PC-9 (cell line): ENCODE measurements at regions of chr15 and their contacts with region 1.

Region 1: GRCh38 chr15:93030430-93031105 is 58.4 kb downstream of the RGMA start:
- DNase-seq: peak; percentile 61 to 68
- H3K4me3 ChIP-seq: no peak overlapping the region
- H3K27ac ChIP-seq: no peak overlapping the region
- H3K4me1 ChIP-seq: no peaks in the 10 kb centered on the region
- H3K27me3 ChIP-seq: no peaks in the 10 kb centered on the region
- CTCF ChIP-seq: peak; percentile 89

Region 2: DNA sequence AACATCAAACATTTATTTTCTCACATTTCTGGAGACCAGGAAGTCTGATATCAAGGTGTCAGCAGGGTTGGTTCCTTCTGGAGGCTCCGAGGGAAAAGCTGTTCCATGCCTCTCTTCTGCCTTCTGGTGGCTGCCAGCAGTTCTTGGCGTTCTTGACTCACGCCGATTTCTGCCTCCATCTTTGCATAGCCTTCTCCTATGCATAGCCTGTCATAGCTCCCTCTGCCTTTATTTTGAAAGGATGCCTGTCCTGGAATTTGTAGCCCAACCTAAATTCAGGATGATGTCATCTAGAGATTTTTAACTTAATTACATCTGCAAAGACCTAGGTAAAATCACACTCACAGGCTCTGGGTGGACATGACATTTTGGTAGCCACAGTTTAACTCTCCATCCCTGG is 12.0 kb before region 1 on chr15:
- CTCF ChIA-PET with region 1: no interaction called
- POLR2A ChIA-PET with region 1: interaction called, 12 read pairs
- intact Hi-C with region 1: no loop called
- DNase-seq: no peak
- H3K4me3 ChIP-seq: no peak overlapping the region
- H3K27ac ChIP-seq: 0 out of 2 replicates have a peak overlapping the region, but pooled peaks have one; percentile 29
- H3K4me1 ChIP-seq: no peaks in the 10 kb centered on the region
- H3K27me3 ChIP-seq: no peaks in the 10 kb centered on the region
- CTCF ChIP-seq: no peak

Region 3: DNA sequence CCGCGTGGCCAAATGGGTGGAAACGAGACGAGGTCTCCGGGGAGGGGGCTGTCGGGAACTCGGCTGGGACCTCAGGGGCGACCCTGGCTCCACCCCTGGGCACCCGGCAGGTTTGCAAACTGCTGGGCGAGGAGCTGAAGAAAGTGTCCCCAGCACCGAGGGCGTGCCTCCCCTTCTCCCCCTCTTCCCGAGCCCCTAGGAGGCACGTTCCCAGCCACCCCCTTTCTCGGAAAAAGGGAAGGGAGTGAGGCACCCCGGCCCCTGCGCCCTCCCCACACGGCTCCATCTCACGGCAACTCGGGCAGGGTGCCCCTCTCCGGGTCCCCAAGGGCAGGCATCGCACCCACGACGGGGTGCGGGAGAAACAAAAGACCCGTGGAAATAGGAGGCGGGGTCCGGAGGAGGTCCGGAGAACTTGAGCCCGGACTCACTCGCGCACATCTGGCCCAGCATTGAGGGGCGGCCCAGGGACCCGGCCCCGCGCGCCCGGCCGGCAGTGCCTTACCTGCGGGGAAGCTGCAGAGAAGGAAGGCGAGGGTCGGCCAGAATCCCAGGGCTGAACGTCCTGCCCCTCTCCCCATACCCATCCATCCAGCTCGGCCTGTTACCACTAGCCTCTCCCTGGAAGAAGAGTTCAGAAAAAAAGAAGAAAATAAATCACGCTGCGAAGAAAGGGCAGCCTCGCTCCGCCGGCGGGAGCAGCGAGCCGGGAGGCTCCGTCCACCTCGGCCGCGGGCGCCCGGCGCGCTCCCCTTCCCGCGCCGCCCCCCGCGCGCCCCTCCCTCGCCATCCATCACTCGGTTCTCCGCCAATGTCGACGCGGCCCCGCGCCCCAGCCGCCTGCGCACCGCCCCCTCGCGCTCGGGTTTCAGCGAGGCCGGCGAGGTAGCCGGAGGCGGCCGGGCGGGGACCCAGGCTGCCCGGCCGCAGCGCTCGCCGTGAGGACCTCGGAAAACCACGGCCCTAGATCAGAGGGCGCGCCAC is 42.1 kb after region 1 on chr15:
- CTCF ChIA-PET with region 1: no interaction called
- POLR2A ChIA-PET with region 1: no interaction called
- intact Hi-C with region 1: loop called (anchors 2 kb)
- DNase-seq: peak; percentile 60 to 84
- H3K4me3 ChIP-seq: peak overlapping the region; percentile 79
- H3K27ac ChIP-seq: no peak overlapping the region
- H3K4me1 ChIP-seq: peaks cover 9% of the 10 kb centered on the region
- H3K27me3 ChIP-seq: peaks cover 19% of the 10 kb centered on the region
- CTCF ChIP-seq: no peak

Region 4: GRCh38 chr15:93974804-93975481 is 944.4 kb after region 1 on chr15:
- CTCF ChIA-PET with region 1: interaction called, 3 read pairs
- POLR2A ChIA-PET with region 1: no interaction called
- intact Hi-C with region 1: loop called (anchors 10 kb)
- DNase-seq: no peak
- H3K4me3 ChIP-seq: no peak overlapping the region
- H3K27ac ChIP-seq: no peak overlapping the region
- H3K4me1 ChIP-seq: no peaks in the 10 kb centered on the region
- H3K27me3 ChIP-seq: no peaks in the 10 kb centered on the region
- CTCF ChIP-seq: peak; percentile 43; the same call in 1 of the 2 replicates

Region 5: DNA sequence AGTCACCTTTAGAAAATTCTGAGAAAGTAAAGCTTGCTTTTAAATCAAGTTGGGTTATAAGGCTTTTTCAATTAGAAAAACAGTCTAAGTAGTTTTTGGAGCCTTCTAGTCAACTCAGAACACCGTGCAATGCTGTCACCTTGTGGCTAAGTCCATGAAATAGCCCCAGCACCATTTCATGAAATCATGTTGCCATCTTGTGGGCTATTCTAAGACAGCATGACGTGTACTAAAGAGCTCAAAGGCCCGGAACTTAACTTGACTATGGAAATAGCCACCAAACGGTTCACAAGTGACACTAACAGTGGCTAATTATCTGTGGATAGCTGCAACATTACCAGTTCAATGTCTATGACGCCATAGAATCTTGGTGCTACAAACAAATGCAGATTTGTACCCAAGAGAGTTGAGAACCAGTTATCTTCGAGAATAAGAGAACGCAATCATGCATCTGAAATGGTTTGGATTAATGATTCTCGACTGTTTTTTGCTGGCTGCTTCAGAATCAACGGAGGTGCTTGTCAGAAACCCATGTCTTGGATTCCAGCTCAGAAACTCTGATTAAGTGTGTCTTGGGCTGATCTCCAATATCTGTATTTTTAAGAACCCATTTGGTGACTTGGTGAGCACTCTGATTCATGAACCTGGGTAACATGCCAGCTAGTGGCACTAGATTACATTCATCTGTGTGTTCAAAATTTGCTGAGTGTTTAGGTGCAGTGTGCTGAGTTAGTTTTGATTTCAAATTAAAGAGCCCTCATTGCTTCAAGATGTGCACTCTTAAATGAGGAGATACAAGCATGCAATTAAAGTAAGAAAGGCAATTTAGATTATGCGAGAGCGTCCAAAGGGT is 1089.6 kb after region 1 on chr15:
- CTCF ChIA-PET with region 1: interaction called, 25 read pairs
- POLR2A ChIA-PET with region 1: no interaction called
- intact Hi-C with region 1: loop called (anchors 1 kb)
- DNase-seq: peak; percentile 35 to 46
- H3K4me3 ChIP-seq: no peak overlapping the region
- H3K27ac ChIP-seq: no peak overlapping the region
- H3K4me1 ChIP-seq: no peaks in the 10 kb centered on the region
- H3K27me3 ChIP-seq: no peaks in the 10 kb centered on the region
- CTCF ChIP-seq: peak; percentile 81

Region 6: DNA sequence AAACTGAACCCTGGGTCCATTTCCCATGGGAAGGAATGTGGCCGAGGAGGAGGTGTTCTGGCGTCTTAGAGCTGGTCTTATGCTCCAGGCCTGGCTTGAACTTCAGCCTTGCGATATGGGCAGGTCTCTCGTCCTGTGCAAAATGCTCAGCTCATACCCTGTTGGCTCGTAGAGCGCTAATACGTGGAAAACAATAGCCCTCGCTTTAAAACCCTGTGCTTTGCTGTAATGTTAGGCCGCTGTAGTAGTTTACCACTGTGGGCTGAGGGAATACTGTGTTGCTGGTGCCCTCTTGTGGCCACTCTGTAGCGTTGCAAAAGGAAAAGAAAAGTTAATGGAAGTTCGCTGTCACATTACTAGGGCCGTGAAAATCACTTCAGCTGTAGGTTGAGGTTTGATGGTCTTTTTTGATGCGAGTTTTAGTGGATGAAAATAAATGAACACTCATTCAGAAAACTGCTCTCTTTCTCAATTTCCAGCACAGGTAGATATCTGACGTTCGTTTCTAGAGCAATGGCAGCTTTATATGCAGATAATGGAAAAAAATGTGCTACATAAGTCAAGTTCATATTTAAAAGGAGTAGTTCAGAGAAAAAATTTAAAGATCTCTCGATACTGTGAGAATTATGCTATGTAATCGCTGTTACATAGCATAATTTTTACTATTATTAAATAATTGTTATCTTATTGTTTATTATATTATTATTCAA is 1293.7 kb after region 1 on chr15:
- CTCF ChIA-PET with region 1: no interaction called
- POLR2A ChIA-PET with region 1: no interaction called
- intact Hi-C with region 1: loop called (anchors 5 kb)
- DNase-seq: peak in 1 of 2 experiments; percentile 19
- H3K4me3 ChIP-seq: no peak overlapping the region
- H3K27ac ChIP-seq: no peak overlapping the region
- H3K4me1 ChIP-seq: no peaks in the 10 kb centered on the region
- H3K27me3 ChIP-seq: no peaks in the 10 kb centered on the region
- CTCF ChIP-seq: peak; percentile 91